ENCODE measurements at regions of chr15 and their contacts with region 1.

Region 1: DNA sequence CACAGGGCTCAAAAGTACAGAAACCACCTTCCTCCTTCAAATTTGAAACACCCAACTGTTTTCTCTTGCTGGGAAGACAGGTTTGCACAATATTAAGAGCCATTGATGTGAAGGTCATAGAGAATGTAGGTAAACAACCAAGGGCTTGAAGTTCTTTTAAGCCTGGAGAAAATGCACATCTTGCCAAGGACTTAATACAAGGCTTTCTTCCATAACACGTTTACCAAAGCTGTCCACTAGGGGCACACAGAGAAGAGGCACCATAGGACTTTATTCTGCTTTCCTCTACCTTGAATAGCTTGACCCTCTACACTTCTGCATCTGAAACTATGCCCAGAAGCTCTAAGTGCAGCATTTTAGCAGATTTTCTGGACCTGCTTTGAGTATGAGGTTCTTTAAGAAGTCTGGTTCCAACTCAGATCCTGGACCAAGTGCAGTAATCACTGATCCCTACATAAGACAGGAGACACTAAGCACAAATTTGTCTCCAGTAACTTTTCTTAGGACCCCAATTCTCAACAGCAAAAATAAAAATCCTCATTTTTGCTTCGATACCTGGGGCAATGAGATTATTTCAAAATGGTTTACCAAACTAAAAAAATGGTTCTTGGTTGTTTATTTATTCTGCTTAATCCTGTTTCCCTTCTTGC is 138.0 kb downstream of the FBN1 start:
- DNase-seq: no peak
- H3K4me3 ChIP-seq: no peak overlapping the region
- H3K27ac ChIP-seq: no peak overlapping the region
- H3K4me1 ChIP-seq: no peaks in the 10 kb centered on the region
- H3K27me3 ChIP-seq: peaks cover 0 to 2% (median 0%) of the 10 kb centered on the region in 4 experiments; a peak in 1 of 7 replicates
- CTCF ChIP-seq: peak in 2 of 3 experiments; percentile 57 to 79; a peak in 2 of 4 replicates
- EP300 ChIP-seq: no peak
- POLR2A ChIP-seq: no peak
- RAD21 ChIP-seq: peak; percentile 48 to 59

Region 2: DNA sequence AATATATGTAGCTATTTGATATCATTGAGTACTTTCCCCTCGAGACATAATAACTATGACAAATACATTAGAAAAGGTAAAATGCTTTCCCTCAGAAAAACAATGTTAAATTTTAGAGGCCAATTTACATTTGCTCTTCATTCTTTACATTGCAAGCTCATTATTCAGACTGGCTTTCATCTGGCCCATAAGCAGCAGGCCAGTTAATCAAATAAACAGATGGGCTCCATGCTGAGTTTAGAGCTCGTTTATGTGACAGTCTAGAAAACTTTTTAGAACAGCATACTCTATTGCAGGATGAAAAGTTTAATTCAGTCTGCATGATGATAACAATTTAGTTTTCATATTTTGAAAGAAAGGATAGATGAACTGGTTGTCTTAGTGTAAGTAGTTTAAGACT is 25.7 kb before region 1 on chr15:
- CTCF ChIA-PET with region 1: interaction called, 20 read pairs
- POLR2A ChIA-PET with region 1: no interaction called
- DNase-seq: no peak
- H3K4me3 ChIP-seq: no peak overlapping the region
- H3K27ac ChIP-seq: no peak overlapping the region
- H3K4me1 ChIP-seq: peaks cover 0 to 3% (median 1%) of the 10 kb centered on the region in 4 experiments; a peak in 2 of 7 replicates
- H3K27me3 ChIP-seq: no peaks in the 10 kb centered on the region
- CTCF ChIP-seq: no peak
- EP300 ChIP-seq: no peak
- POLR2A ChIP-seq: no peak
- RAD21 ChIP-seq: no peak

Region 3: GRCh38 chr15:48493084-48493762 is 14.3 kb before region 1 on chr15:
- CTCF ChIA-PET with region 1: interaction called, 16 read pairs
- POLR2A ChIA-PET with region 1: no interaction called
- DNase-seq: no peak
- H3K4me3 ChIP-seq: no peak overlapping the region
- H3K27ac ChIP-seq: no peak overlapping the region
- H3K4me1 ChIP-seq: no peaks in the 10 kb centered on the region; a peak in 1 of 7 replicates
- H3K27me3 ChIP-seq: no peaks in the 10 kb centered on the region
- CTCF ChIP-seq: no peak
- EP300 ChIP-seq: no peak
- POLR2A ChIP-seq: no peak
- RAD21 ChIP-seq: no peak

Region 4: DNA sequence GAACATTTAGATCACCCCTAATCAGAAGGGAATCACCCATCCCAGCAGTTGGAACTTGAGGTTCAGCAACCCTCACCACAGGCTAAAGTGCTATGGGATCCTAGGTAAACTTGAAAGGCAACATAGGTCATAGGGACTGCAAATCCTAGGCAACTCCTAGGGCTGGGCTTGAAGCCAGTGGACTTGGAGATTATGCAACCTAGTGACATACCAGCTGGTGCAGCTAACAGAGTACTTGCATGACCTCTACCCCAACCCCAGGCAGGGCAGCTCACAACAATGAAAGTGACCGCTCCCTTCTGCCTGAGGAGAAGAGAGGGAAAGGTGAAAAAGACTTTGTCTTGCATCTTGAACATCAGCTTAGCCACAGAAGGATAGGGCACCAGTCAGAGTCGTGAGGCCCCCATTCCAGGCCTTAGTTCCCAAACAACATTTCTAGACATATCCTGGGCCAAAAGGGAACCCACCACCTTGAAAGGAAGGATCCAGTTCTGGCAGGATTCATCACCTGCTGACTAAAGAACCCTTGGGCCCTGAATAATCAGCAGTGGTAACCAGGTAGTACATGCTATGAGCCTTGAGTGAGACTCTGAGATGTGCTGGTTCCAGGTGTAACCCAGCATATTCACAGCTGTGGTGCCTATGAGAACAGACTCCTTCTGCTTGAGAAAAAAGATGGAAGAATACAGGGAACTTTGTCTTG is 175.6 kb after region 1 on chr15:
- CTCF ChIA-PET with region 1: no interaction called
- POLR2A ChIA-PET with region 1: no interaction called
- DNase-seq: no peak
- H3K4me3 ChIP-seq: no peak overlapping the region
- H3K27ac ChIP-seq: no peak overlapping the region
- H3K4me1 ChIP-seq: no peaks in the 10 kb centered on the region
- H3K27me3 ChIP-seq: peaks cover 0 to 1% (median 0%) of the 10 kb centered on the region in 4 experiments; a peak in 1 of 7 replicates
- CTCF ChIP-seq: no peak
- EP300 ChIP-seq: no peak
- POLR2A ChIP-seq: no peak
- RAD21 ChIP-seq: no peak